ENCODE measurements at regions of chr3 and their contacts with region 1.

Region 1: DNA sequence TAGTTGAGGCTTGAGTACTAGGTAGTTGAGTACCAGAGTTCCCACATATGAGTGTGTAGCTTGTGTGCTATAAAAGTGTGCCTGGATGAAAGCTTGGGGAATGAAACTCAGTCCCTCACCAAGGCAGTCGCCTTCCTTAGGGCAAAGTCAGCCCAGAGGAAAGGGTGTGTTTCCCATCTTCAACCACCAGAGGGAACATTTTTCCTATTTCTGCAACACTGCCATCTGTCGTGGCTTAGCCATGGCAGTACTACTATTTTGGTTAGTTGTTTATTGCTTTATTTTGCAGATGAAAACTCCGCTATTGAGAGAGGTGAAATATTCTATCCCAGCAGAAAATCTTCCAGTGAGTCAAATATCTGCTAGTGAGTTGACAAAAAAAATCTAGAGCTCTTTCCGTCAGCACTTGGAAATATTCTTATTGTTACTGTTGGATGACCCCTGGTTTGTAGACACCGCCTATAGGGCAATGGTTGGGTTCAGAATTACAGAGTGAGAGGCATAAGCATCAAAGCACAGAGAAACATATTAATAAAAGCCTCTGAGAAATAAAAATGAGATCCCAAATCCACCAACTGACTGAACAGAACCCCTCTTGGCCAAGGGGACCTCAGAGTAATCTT is 239.9 kb downstream of the CPNE4 start:
- DNase-seq: no peak
- ATAC-seq: peak; percentile 77 to 91
- H3K4me3 ChIP-seq: no peak overlapping the region
- H3K27ac ChIP-seq: no peak overlapping the region
- H3K4me1 ChIP-seq: no peaks in the 10 kb centered on the region
- H3K27me3 ChIP-seq: peaks cover 2% of the 10 kb centered on the region

Region 2: DNA sequence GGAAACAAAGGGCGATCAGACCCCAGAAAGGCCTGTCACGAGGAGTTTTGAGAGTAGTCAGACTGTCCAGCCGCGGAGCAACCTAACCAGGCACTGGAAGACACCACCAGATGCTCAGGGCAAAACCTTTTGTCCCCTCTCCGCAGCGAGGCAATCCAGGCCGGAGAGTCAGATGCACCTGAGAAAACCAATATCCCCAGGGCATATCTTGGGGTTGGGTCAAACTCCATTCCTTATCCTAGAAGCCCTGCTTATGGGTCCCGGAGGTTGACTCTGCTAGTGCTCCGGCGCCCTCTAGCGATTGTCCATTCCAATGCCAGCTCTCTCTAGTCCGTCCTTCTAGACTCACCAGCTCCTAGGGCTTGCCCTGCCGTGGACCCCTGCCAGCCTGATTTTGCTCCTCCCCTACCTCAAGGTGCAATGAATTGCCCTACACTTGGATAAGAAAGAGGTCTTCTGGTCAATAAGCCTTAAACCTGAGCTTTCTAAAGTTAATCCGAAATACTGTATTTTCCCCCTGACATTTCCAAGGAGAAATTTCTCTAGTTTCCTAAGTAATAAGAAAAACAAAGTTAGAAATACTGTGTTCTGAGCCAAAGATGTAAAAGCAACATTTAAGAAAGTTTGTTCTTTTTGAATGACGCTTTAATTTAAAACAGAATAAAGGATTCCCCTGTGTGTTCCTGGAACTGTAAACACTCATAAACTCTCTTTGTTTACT is 234.5 kb after region 1 on chr3:
- intact Hi-C with region 1: loop called (anchors 2 to 5 kb)
- DNase-seq: peak; percentile 83 to 93 (median 89)
- ATAC-seq: peak; percentile 90 to 94
- H3K4me3 ChIP-seq: no peak overlapping the region
- H3K27ac ChIP-seq: no peak overlapping the region
- H3K4me1 ChIP-seq: no peaks in the 10 kb centered on the region
- H3K27me3 ChIP-seq: no peaks in the 10 kb centered on the region

Region 3: DNA sequence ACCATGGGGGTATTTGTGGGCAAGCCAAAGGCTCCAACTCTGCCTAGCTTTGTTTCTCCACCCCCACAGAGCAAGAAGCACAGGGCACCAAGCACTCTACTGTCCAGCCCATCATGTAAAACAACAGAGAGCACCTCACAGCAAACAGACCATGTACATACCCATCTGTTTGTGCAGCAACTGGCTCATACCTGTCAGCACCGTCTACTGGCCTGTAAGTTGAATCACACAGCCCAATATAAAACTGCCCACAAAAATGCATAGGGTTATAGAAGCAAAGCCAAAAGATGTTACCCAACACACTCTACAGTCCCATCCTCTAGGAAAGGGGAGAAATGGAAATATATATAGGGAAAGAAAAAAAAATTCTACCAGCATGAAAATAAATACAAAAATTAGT is 379.6 kb after region 1 on chr3:
- intact Hi-C with region 1: loop called in 1 of 4 experiments (anchors 10 kb)
- DNase-seq: no peak
- ATAC-seq: no peak
- H3K4me3 ChIP-seq: no peak overlapping the region
- H3K27ac ChIP-seq: no peak overlapping the region
- H3K4me1 ChIP-seq: peaks cover 1% of the 10 kb centered on the region
- H3K27me3 ChIP-seq: no peaks in the 10 kb centered on the region

Measured in right cardiac atrium (tissue), 5 donors.